Left ventricle myocardium inferior (tissue), 1 donor: ENCODE measurements at regions of chr15 and their contacts with region 1.

Region 1: GRCh38 chr15:75453703-75454470 is 2.4 kb upstream of the SIN3A start:
- DNase-seq: peak; percentile 98
- H3K4me3 ChIP-seq: peak overlapping the region; percentile 93
- H3K27ac ChIP-seq: peak overlapping the region; percentile 97
- H3K4me1 ChIP-seq: peaks cover 56% of the 10 kb centered on the region
- H3K27me3 ChIP-seq: no peaks in the 10 kb centered on the region
- CTCF ChIP-seq: no peak

Region 2: DNA sequence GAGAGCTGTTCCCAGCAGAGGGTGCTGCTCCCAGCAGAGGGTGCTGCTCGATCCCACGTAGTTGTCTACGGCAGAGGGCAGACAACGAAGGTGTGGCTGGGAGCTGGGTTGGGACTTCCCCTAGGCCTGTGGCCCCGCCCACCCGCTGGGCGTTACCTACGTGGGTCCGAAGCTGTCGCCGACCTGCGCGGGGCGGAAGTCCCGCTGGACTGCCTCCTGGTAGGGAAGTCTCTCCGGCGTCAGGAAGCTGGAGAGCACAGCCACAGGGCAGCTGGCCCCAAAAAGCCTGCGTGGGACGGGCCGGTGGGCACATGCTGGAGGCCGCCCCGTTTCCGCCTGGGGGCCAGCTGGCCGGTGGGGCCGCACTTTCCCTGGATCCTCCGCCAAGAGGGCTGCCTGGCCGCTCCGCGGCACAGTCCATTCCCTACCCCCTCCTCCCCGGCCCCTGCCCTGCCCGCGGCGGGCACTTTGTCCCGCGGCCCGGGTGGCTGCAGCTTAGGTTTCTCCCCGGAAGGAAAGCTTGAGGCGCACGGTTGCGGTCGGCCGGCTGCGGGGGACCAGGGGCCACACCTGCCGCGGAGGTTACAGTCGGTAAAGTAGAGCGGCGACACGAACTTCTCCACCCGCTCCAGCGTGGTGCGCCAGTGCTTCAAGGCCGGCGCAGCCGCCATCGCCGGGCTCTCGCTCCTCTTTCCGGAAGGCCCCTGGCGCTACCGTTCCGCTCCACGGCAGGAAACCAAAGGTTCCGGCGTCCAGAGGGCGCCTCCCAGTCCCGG is 85.8 kb before region 1 on chr15 and contains the start of gene MAN2C1:
- intact Hi-C with region 1: loop called (anchors 5 kb)
- DNase-seq: peak; percentile 95
- H3K4me3 ChIP-seq: peak within 1 kb of the TSS; percentile 89
- H3K27ac ChIP-seq: peak within 1 kb of the TSS; percentile 99
- H3K4me1 ChIP-seq: peaks cover 30% of the 10 kb centered on the region
- H3K27me3 ChIP-seq: no peaks in the 10 kb centered on the region
- CTCF ChIP-seq: peak; percentile 83
- total RNA-seq, gene MAN2C1: 114 TPM